ENCODE measurements at regions of chr9 and their contacts with region 1.

Region 1: DNA sequence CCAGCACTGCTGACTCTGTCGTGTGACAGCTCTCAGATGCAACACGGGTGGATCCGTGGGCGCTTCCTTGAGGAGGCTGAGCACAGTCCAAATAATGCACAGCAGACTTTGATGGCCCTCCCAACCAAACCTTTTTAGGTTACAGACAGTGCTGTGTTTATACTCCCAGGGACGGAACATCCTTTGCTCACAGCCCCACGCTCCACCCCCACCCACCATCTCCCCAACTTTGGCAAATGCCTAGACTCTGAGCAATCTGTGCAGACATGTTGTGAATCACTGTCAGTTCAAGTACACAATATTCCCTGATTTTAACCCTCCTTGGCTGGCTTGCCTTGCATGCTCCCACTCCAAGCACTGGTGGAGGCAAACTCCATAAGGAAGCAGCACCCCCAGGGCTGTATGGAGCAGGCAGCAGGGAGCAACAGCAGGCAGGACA is 324.6 kb downstream of the MLLT3 start:
- DNase-seq: no peak
- ATAC-seq: no peak
- H3K4me3 ChIP-seq: no peak overlapping the region
- H3K27ac ChIP-seq: no peak overlapping the region
- H3K4me1 ChIP-seq: no peaks in the 10 kb centered on the region
- H3K27me3 ChIP-seq: no peaks in the 10 kb centered on the region
- CTCF ChIP-seq: no peak
- EP300 ChIP-seq: no peak
- POLR2A ChIP-seq: no peak
- RAD21 ChIP-seq: no peak

Region 2: DNA sequence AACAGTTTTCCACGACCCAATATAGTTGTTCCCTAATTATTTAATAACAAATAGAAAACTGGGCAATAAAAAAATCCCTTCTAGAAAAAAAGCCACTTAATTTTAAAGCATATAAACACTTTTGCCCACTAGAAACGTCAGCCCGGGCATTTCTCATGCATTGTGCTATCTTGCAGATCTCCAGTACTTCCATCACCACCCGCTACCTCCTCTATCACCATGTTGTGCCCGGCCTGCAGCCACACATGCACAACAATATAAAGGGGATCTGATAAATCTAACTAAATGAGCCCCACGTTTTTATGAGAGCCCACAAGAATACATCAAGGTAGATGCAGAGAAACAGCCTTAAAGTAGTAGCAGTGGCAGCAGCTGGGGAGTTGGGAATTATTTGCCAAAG is 51.9 kb after region 1 on chr9:
- CTCF ChIA-PET with region 1: no interaction called
- POLR2A ChIA-PET with region 1: no interaction called
- RAD21 ChIA-PET with region 1: no interaction called
- SMC1A ChIA-PET with region 1: no interaction called
- in situ Hi-C with region 1: loop called (anchors 5 kb)
- intact Hi-C with region 1: no loop called
- DNase-seq: no peak
- ATAC-seq: no peak
- H3K4me3 ChIP-seq: no peak overlapping the region
- H3K27ac ChIP-seq: no peak overlapping the region
- H3K4me1 ChIP-seq: peaks cover 16% of the 10 kb centered on the region
- H3K27me3 ChIP-seq: no peaks in the 10 kb centered on the region
- CTCF ChIP-seq: no peak
- EP300 ChIP-seq: no peak
- POLR2A ChIP-seq: no peak
- RAD21 ChIP-seq: no peak